ENCODE measurements at regions of chr10 and their contacts with region 1.

Region 1: GRCh38 chr10:108112219-108112618 is 947.7 kb upstream of the SORCS1 start:
- DNase-seq: no peak
- ATAC-seq: no peak
- H3K4me3 ChIP-seq: no peak overlapping the region
- H3K27ac ChIP-seq: no peak overlapping the region
- H3K4me1 ChIP-seq: no peaks in the 10 kb centered on the region
- H3K27me3 ChIP-seq: no peaks in the 10 kb centered on the region
- CTCF ChIP-seq: peak in 2 of 3 experiments; percentile 3 to 31; a peak in 1 of 6 replicates
- POLR2A ChIP-seq: no peak
- RAD21 ChIP-seq: no peak

Region 2: GRCh38 chr10:108250936-108251620 is 138.9 kb after region 1 on chr10:
- CTCF ChIA-PET with region 1: no interaction called
- POLR2A ChIA-PET with region 1: no interaction called
- RAD21 ChIA-PET with region 1: no interaction called
- intact Hi-C with region 1: no loop called
- DNase-seq: no peak
- ATAC-seq: no peak
- H3K4me3 ChIP-seq: no peak overlapping the region
- H3K27ac ChIP-seq: no peak overlapping the region
- H3K4me1 ChIP-seq: no peaks in the 10 kb centered on the region
- H3K27me3 ChIP-seq: no peaks in the 10 kb centered on the region
- CTCF ChIP-seq: no peak
- POLR2A ChIP-seq: no peak
- RAD21 ChIP-seq: no peak

Region 3: GRCh38 chr10:109852475-109853037 is 1740.3 kb after region 1 on chr10:
- CTCF ChIA-PET with region 1: no interaction called
- POLR2A ChIA-PET with region 1: no interaction called
- RAD21 ChIA-PET with region 1: no interaction called
- intact Hi-C with region 1: loop called (anchors 5 kb)
- DNase-seq: peak; percentile 66
- ATAC-seq: peak; percentile 98
- H3K4me3 ChIP-seq: no peak overlapping the region
- H3K27ac ChIP-seq: no peak overlapping the region
- H3K4me1 ChIP-seq: no peaks in the 10 kb centered on the region; a peak in 1 of 4 replicates
- H3K27me3 ChIP-seq: peaks cover 23% of the 10 kb centered on the region
- CTCF ChIP-seq: peak; percentile 63 to 99 (median 96)
- POLR2A ChIP-seq: no peak
- RAD21 ChIP-seq: peak; percentile 94